ENCODE measurements at regions of chr9 and their contacts with region 1.

Region 1: DNA sequence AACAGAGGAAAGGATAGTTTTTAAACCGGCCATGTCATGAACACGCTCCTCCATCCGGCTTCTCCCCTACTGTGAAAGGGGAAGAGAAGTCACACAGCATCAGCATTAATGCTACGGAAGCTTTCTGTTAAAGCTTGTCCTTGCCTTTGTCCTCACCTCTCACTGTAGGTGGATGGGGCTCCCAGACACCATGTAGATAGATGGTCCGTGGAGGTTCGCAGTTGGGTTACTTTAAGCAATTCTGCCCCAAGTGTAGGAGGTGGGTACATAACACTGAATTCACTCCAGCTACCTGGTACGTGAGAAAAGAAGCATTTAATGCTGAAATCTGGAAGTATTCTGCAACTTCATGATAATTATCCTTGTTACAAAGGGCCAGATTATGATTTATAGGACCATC is 165.8 kb downstream of the BAAT start:
- DNase-seq: no peak
- H3K4me3 ChIP-seq: no peak overlapping the region
- H3K27ac ChIP-seq: no peak overlapping the region
- H3K27me3 ChIP-seq: no peaks in the 10 kb centered on the region
- CTCF ChIP-seq: no peak

Region 2: GRCh38 chr9:101167490-101168134 is 51.4 kb before region 1 on chr9:
- intact Hi-C with region 1: loop called in 1 of 2 experiments (anchors 5 kb)
- DNase-seq: no peak
- H3K4me3 ChIP-seq: peak overlapping the region in 1 of 59 donors; percentile 5
- H3K27ac ChIP-seq: peak overlapping the region in 55 of 59 donors; percentile 9 to 97 (median 64)
- H3K27me3 ChIP-seq: no peaks in the 10 kb centered on the region
- CTCF ChIP-seq: no peak

Region 3: GRCh38 chr9:101254733-101255473 is 35.9 kb after region 1 on chr9:
- intact Hi-C with region 1: no loop called
- DNase-seq: no peak
- H3K4me3 ChIP-seq: no peak overlapping the region
- H3K27ac ChIP-seq: no peak overlapping the region
- H3K27me3 ChIP-seq: peaks cover 0 to 3% (median 0%) of the 10 kb centered on the region in 45 donors
- CTCF ChIP-seq: no peak